AG04450 (cell line): ENCODE measurements at regions of chr12 and their contacts with region 1.

Region 1: DNA sequence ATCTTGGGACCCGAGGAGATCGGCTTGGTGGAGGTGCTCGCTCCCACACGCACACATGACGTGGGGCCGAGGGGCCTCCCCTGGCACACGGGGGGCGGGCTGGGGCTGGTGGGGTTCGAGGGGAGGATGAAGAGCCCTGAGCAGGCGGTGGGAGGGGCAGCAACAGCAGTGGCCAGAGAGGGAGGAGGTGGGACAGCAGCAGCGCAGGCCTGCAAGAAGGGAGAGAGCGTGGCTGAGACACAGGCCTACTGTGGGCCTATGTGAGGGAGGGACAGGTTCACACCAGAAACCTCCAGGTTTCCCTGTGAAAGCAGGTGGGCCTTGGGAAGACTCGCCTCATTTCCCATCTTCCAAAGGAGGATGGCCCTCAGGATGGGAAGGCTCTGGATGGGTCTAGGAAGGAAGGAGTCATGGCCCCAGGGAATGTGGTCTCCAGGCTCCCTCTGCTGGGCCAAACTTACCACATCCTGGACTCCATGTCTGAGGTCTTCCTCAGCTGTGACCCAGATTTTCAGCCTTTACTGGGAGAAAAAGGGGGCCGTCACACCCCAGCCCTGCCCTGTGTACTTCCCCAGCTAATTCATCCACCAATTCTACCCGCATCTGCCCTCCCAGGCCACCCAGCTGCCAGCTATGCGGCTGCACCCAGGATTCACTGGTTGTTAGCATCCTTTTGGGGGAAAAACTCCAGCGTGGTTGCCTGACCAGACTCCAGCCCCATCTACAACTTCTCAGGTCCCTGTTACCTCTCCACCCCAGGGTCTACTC is 2.8 kb downstream of the PIANP start:
- DNase-seq: peak; percentile 13
- H3K4me3 ChIP-seq: no peak overlapping the region
- H3K27ac ChIP-seq: no peak overlapping the region
- H3K27me3 ChIP-seq: peaks cover 2% of the 10 kb centered on the region
- CTCF ChIP-seq: peak; percentile 71

Region 2: GRCh38 chr12:6613776-6614512 is 83.8 kb before region 1 on chr12:
- CTCF ChIA-PET with region 1: interaction called, 12 read pairs
- POLR2A ChIA-PET with region 1: no interaction called
- DNase-seq: peak; percentile 93
- H3K4me3 ChIP-seq: no peak overlapping the region
- H3K27ac ChIP-seq: peak overlapping the region; percentile 65
- H3K27me3 ChIP-seq: no peaks in the 10 kb centered on the region
- CTCF ChIP-seq: 0 out of 2 replicates have a peak, but pooled peaks have one; percentile 5

Region 3: DNA sequence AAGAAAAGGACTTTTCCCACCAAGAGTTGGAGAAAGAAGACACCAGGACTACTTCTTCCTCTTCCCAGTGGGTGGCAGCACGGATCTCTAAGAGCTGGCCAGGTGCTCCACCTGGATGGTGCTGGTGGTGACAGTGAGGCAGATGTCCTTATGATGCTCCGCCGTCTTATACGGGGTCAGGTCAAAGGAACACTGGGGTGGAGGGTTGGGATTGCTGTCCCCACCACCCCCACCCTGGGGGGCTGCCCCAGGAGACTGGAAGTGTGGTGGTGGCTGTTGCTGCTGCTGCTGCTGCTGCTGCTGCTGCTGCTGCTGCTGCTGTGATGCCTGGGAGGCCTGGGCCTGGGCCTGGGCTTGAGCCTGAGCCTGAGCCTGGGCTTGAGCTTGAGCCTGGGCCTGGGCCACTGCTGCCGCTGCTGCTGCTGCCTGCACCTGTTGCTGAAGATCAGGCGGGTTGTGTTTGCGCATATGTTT is 30.1 kb before region 1 on chr12:
- CTCF ChIA-PET with region 1: no interaction called
- POLR2A ChIA-PET with region 1: interaction called, 12 read pairs
- DNase-seq: no peak
- H3K4me3 ChIP-seq: no peak overlapping the region
- H3K27ac ChIP-seq: no peak overlapping the region
- H3K27me3 ChIP-seq: no peaks in the 10 kb centered on the region
- CTCF ChIP-seq: no peak